CD4-positive, alpha-beta T cell (primary cell): ENCODE measurements at regions of chr2 and their contacts with region 1.

Region 1: DNA sequence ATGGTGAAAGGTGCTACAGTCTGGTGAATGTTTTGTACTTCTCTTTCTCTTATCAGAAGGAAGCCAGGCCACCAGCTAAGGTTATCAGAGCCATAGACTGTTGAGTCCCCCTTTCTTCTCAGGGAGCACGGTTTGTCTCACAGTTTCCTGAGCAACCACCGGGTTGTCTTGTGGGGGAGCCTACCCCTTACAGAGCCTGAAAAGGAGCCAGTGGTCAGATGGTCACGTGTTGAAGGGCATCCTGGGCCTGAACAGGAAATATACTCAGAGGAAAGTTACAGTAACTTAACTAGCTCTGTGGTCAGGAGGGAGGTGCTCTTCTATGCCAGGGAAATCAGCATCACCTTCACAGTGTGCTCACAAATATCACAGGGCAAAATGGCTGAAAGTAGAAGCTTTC is 11.6 kb downstream of the CD28 start:
- DNase-seq: peak in 10 of 14 experiments; percentile 29 to 83 (median 44)
- ATAC-seq: peak; percentile 45
- H3K4me3 ChIP-seq: peak overlapping the region; percentile 21
- H3K4me3 Mint-ChIP-seq: peak overlapping the region; percentile 75
- H3K27ac ChIP-seq: peak overlapping the region; percentile 70 to 72
- H3K27ac Mint-ChIP-seq: peak overlapping the region; percentile 92
- H3K4me1 ChIP-seq: peaks cover 81% of the 10 kb centered on the region
- H3K4me1 Mint-ChIP-seq: peaks cover 97% of the 10 kb centered on the region
- H3K27me3 ChIP-seq: no peaks in the 10 kb centered on the region
- H3K27me3 Mint-ChIP-seq: no peaks in the 10 kb centered on the region
- CTCF ChIP-seq: no peak

Region 2: DNA sequence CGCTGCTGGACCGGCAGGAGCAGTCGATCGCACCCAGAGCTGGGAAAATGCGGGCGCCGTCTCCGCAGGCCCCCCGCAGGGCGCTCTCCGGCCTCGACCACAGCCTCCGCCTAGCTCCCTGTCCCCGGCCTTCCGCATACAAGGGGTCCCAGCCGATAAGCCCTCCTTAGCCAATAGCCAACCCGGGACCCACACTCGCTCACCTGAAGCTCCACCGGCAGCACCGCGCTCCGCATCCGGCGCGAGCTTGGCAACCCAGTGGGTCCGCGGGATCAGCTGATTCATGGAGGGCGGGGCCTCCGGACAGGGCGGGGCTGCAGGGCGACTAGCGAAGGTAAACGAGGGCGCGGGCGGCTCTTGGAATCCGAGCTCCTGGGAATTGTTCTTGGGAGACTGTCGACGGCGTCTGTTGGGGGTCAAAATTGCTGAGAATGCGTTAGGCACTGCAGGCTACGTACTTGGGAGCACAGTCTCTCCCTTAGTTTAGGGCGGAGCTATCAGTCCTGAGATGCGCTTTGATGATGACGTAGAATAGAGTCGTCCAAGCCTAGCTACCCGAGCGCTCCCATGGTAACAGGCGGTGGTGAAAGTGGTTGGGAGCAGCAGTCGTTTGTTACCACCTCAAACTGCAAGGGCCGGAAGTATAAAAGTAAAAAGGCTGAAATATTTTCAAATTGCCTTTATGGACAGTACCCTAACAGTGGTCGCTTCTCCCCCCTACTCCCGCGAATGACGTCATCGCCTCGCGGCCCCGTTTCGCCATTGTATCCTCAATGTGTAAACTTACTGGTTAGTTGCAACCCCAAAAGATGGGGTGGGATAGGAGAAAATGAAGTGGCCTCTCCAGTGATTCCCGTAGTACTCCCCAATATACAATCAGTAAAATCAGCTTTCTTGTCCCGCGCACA is 1937.2 kb before region 1 on chr2 and contains the start of gene ALS2:
- CTCF ChIA-PET with region 1: no interaction called
- POLR2A ChIA-PET with region 1: no interaction called
- intact Hi-C with region 1: loop called in 1 of 2 experiments (anchors 5 kb)
- DNase-seq: peak; percentile 86 to 96 (median 92)
- ATAC-seq: peak; percentile 90
- H3K4me3 ChIP-seq: peak within 1 kb of the TSS; percentile 66
- H3K4me3 Mint-ChIP-seq: peak within 1 kb of the TSS; percentile 98
- H3K27ac ChIP-seq: peak within 1 kb of the TSS; percentile 77 to 88
- H3K27ac Mint-ChIP-seq: peak within 1 kb of the TSS; percentile 93
- H3K4me1 ChIP-seq: peaks cover 15% of the 10 kb centered on the region
- H3K4me1 Mint-ChIP-seq: peaks cover 20% of the 10 kb centered on the region
- H3K27me3 ChIP-seq: no peaks in the 10 kb centered on the region
- H3K27me3 Mint-ChIP-seq: no peaks in the 10 kb centered on the region
- CTCF ChIP-seq: no peak
- total RNA-seq, gene ALS2: 7.0 to 7.2 TPM

Region 3: DNA sequence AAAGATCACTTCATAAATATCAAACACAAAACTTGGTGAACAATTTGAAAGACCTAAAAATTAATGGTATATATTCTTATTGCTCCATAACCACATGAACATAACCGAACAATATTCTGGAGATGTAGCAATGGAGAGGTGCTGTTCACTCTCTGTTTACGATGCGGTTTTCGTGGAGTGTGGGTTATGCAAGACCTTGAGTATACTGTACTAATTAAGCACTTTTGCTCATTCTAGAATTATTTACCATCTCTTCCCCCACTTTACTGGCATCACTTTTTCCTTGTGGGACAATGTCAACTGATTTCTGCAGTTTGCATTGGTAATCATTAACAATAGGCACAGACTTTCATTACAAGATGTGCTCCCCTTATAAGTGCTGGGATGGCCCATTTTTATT is 280.6 kb before region 1 on chr2:
- CTCF ChIA-PET with region 1: no interaction called
- POLR2A ChIA-PET with region 1: no interaction called
- intact Hi-C with region 1: no loop called
- DNase-seq: no peak
- ATAC-seq: no peak
- H3K4me3 ChIP-seq: no peak overlapping the region
- H3K4me3 Mint-ChIP-seq: no peak overlapping the region
- H3K27ac ChIP-seq: no peak overlapping the region
- H3K27ac Mint-ChIP-seq: no peak overlapping the region
- H3K4me1 ChIP-seq: no peaks in the 10 kb centered on the region
- H3K4me1 Mint-ChIP-seq: no peaks in the 10 kb centered on the region
- H3K27me3 ChIP-seq: no peaks in the 10 kb centered on the region
- H3K27me3 Mint-ChIP-seq: no peaks in the 10 kb centered on the region
- CTCF ChIP-seq: no peak

Region 4: DNA sequence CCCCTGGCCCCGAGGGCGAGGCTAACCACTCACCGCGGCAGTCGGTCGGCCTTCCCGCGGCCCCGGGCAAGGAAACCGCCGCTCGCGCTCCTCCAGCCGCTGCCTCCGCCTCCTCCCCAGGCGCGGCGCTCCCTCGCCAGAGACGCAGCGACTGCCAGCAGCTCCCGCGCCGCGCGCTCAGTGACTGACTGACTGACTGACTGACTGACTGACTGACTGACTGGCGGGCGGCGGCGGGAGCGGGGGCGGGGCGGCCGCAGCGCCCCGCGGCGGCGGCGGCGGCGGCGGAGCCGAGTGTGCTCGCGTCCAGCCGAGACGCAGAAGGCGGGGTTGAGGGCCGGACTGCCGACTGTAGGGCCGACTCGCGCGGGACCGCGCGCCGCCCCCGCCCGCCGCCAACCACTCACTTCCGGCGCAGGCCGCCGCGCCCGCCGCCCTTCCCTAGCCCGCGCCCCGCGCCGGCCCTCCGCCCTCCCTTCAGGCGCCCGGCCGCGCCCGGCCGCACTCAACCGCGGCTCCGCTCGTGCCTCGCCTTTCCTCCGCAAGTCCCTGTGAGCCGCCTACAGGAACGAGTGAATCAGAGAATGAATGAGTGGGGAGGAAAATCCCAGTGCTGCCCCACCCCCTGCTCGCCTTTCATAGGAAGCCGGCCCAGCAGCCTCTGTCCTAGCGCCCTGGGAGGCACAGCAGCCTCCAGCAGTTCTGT is 182.9 kb before region 1 on chr2 and contains the start of gene RAPH1:
- CTCF ChIA-PET with region 1: interaction called, 5 read pairs
- POLR2A ChIA-PET with region 1: interaction called, 16 read pairs
- intact Hi-C with region 1: loop called in 1 of 2 experiments (anchors 5 kb)
- DNase-seq: peak; percentile 13 to 77 (median 49)
- ATAC-seq: peak; percentile 61
- H3K4me3 ChIP-seq: peak within 1 kb of the TSS; percentile 72
- H3K4me3 Mint-ChIP-seq: peak within 1 kb of the TSS; percentile 97
- H3K27ac ChIP-seq: no peak within 1 kb of the TSS
- H3K27ac Mint-ChIP-seq: peak within 1 kb of the TSS; percentile 80
- H3K4me1 ChIP-seq: peaks cover 20% of the 10 kb centered on the region
- H3K4me1 Mint-ChIP-seq: peaks cover 36% of the 10 kb centered on the region
- H3K27me3 ChIP-seq: peaks cover 0 to 4% of the 10 kb centered on the region in 2 experiments
- H3K27me3 Mint-ChIP-seq: peaks cover 5% of the 10 kb centered on the region
- CTCF ChIP-seq: no peak
- total RNA-seq, gene RAPH1: 4.3 to 5.8 TPM

Region 5: DNA sequence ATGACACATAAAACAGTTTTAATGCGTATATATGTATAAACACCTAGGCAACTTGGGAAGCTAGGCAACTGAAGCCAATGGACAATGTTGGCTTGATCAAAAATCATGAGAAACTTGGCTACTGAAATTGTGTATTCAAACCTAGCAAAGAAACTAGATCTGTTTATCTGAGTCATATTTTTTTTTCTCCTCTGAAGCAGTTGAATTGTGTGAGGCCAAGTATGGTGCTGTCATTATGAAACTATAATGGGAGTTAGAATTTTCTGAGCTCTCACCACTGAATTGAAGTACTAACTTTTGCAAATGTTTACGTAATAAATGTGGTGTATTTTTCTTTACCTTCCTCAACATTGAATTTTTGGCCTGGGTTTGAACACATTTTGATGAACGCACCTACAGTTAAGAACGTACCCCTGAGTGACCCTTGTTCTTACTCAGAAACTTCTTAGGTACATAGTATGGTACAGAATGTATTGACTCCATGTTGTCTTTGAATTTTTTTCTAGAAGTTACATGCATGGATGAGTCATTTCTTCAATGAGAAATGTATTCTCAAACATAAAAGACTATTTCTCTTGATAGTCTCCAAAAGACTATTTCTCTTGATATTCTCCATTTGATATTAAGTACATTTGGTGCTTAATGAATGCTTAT is 12.1 kb after region 1 on chr2:
- CTCF ChIA-PET with region 1: interaction called, 14 read pairs
- POLR2A ChIA-PET with region 1: interaction called, 621 read pairs
- intact Hi-C with region 1: loop called in 1 of 2 experiments (anchors 2 kb)
- DNase-seq: no peak
- ATAC-seq: peak; percentile 62
- H3K4me3 ChIP-seq: no peak overlapping the region
- H3K4me3 Mint-ChIP-seq: peak overlapping the region; percentile 75
- H3K27ac ChIP-seq: peak overlapping the region; percentile 25 to 26
- H3K27ac Mint-ChIP-seq: peak overlapping the region; percentile 87
- H3K4me1 ChIP-seq: peaks cover 61% of the 10 kb centered on the region
- H3K4me1 Mint-ChIP-seq: peaks cover 95% of the 10 kb centered on the region
- H3K27me3 ChIP-seq: no peaks in the 10 kb centered on the region
- H3K27me3 Mint-ChIP-seq: no peaks in the 10 kb centered on the region
- CTCF ChIP-seq: no peak

Region 6: DNA sequence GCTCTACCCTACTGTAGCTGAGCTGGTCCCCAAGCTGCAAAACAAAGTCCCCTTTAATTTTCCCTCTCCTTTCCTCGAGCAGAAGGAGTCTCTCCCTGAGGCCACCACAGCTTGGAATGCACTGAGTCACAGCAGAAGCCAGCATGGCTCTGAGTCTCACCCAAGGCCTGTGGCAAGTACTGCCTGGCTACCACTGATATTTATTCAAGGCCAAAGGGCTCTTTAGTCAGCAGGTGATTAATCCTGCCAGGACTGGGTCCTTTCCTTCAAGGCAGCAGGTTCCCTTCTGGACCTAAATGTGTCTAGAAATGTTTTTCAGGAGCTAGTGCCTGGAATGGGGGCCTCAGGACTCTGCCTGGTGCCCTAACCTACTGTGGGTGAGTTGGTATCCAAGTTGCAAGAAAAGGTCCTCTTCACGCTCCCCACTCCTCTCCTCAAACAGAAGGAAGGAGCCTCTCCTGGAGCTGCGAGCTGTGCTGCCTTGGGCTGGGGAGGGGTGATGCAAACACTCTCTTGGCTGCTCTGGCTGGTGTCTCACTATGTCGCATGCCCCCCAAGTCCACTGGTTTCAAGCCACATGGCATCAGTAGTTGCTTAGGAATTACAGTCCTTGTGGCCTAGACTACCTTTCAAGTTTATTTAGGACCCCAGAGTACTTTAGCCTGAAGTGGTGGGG is 41.7 kb after region 1 on chr2:
- CTCF ChIA-PET with region 1: no interaction called
- POLR2A ChIA-PET with region 1: interaction called, 8 read pairs
- intact Hi-C with region 1: loop called in 1 of 2 experiments (anchors 5 kb)
- DNase-seq: no peak
- ATAC-seq: no peak
- H3K4me3 ChIP-seq: no peak overlapping the region
- H3K4me3 Mint-ChIP-seq: no peak overlapping the region
- H3K27ac ChIP-seq: no peak overlapping the region
- H3K27ac Mint-ChIP-seq: peak overlapping the region; percentile 64
- H3K4me1 ChIP-seq: peaks cover 33% of the 10 kb centered on the region
- H3K4me1 Mint-ChIP-seq: peaks cover 81% of the 10 kb centered on the region
- H3K27me3 ChIP-seq: no peaks in the 10 kb centered on the region
- H3K27me3 Mint-ChIP-seq: no peaks in the 10 kb centered on the region
- CTCF ChIP-seq: no peak

Region 7: DNA sequence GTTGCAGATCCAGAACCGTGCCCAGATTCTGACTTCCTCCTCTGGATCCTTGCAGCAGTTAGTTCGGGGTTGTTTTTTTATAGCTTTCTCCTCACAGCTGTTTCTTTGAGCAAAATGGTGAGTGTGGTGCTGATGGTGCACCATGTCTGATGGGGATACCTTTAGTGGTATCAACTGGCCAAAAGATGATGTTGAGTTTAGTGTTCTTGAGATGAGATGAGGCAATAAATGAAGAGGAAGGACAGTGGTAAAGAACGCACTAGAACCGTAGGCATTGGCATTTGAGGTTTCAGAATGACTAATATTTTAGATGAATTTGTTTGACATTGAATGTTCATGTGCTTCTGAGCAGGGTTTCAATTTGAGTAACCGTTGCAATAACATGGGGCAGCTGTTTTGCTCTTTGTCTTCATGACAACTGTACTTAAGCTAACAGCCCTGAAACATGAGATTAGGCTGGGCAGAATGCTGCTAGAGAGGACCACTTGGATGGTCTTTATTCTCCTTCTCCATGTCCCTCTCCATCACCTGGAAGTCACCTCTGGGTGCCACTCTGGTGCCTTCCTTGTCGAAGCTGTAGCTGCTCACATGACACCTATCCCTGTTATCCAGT is 153.4 kb after region 1 on chr2:
- CTCF ChIA-PET with region 1: no interaction called
- POLR2A ChIA-PET with region 1: interaction called, 13 read pairs
- intact Hi-C with region 1: no loop called
- DNase-seq: peak in 4 of 14 experiments; percentile 28 to 62 (median 48)
- ATAC-seq: no peak
- H3K4me3 ChIP-seq: peak overlapping the region; percentile 58
- H3K4me3 Mint-ChIP-seq: peak overlapping the region; percentile 89
- H3K27ac ChIP-seq: peak overlapping the region; percentile 6 to 62
- H3K27ac Mint-ChIP-seq: peak overlapping the region; percentile 93
- H3K4me1 ChIP-seq: peaks cover 57% of the 10 kb centered on the region
- H3K4me1 Mint-ChIP-seq: peaks cover 97% of the 10 kb centered on the region
- H3K27me3 ChIP-seq: no peaks in the 10 kb centered on the region
- H3K27me3 Mint-ChIP-seq: no peaks in the 10 kb centered on the region
- CTCF ChIP-seq: no peak